Caco-2 (cell line): ENCODE measurements at regions of chr5 and their contacts with region 1.

Region 1: GRCh38 chr5:118956727-118957126 is 31.6 kb downstream of the DTWD2 start:
- DNase-seq: no peak
- H3K4me3 ChIP-seq: no peak overlapping the region
- H3K4me3 Mint-ChIP-seq: no peak overlapping the region
- H3K27ac Mint-ChIP-seq: no peak overlapping the region
- H3K4me1 ChIP-seq: no peaks in the 10 kb centered on the region
- H3K4me1 Mint-ChIP-seq: no peaks in the 10 kb centered on the region
- H3K27me3 ChIP-seq: no peaks in the 10 kb centered on the region
- H3K27me3 Mint-ChIP-seq: no peaks in the 10 kb centered on the region
- CTCF ChIP-seq: peak; percentile 31 to 42

Region 2: DNA sequence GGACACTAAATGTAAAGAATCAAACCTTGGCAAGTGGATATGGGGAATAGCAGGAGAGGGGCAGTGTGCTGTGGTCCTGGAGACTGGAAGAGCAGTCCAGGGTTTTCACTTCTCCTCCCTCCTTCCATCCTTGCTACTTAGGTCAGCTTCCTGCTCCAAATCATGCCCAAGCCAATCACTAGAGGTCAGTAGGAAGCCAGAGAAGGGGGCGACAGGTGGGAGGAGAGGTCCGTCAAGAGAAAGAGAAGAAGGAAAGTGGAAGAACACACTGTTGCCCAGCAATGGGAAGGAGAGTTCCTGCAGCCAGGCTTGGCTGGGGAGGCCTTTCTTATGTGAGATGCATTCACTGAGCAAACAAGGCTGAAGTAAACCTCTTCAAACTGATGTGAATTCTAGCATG is 258.0 kb before region 1 on chr5:
- CTCF ChIA-PET with region 1: no interaction called
- POLR2A ChIA-PET with region 1: no interaction called
- intact Hi-C with region 1: loop called (anchors 1 kb)
- DNase-seq: peak in 1 of 2 experiments; percentile 19
- H3K4me3 ChIP-seq: no peak overlapping the region
- H3K4me3 Mint-ChIP-seq: no peak overlapping the region
- H3K27ac Mint-ChIP-seq: no peak overlapping the region
- H3K4me1 ChIP-seq: no peaks in the 10 kb centered on the region
- H3K4me1 Mint-ChIP-seq: no peaks in the 10 kb centered on the region
- H3K27me3 ChIP-seq: no peaks in the 10 kb centered on the region
- H3K27me3 Mint-ChIP-seq: peaks cover 2% of the 10 kb centered on the region
- CTCF ChIP-seq: peak in 1 of 2 experiments; percentile 26

Region 3: GRCh38 chr5:118984602-118985001 is 27.9 kb after region 1 on chr5:
- CTCF ChIA-PET with region 1: no interaction called
- POLR2A ChIA-PET with region 1: no interaction called
- intact Hi-C with region 1: no loop called
- DNase-seq: no peak
- H3K4me3 ChIP-seq: no peak overlapping the region
- H3K4me3 Mint-ChIP-seq: no peak overlapping the region
- H3K27ac Mint-ChIP-seq: no peak overlapping the region
- H3K4me1 ChIP-seq: peaks cover 23% of the 10 kb centered on the region
- H3K4me1 Mint-ChIP-seq: peaks cover 14% of the 10 kb centered on the region
- H3K27me3 ChIP-seq: no peaks in the 10 kb centered on the region
- H3K27me3 Mint-ChIP-seq: no peaks in the 10 kb centered on the region
- CTCF ChIP-seq: no peak

Region 4: GRCh38 chr5:119315516-119315949 is 358.8 kb after region 1 on chr5:
- CTCF ChIA-PET with region 1: no interaction called
- POLR2A ChIA-PET with region 1: interaction called, 11 read pairs
- intact Hi-C with region 1: no loop called
- DNase-seq: no peak
- H3K4me3 ChIP-seq: no peak overlapping the region
- H3K4me3 Mint-ChIP-seq: no peak overlapping the region
- H3K27ac Mint-ChIP-seq: no peak overlapping the region
- H3K4me1 ChIP-seq: no peaks in the 10 kb centered on the region
- H3K4me1 Mint-ChIP-seq: no peaks in the 10 kb centered on the region
- H3K27me3 ChIP-seq: no peaks in the 10 kb centered on the region
- H3K27me3 Mint-ChIP-seq: no peaks in the 10 kb centered on the region
- CTCF ChIP-seq: peak in 1 of 2 experiments; percentile 28